Aorta (tissue), 5 donors: ENCODE measurements at regions of chr16 and their contacts with region 1.

Region 1: GRCh38 chr16:72467157-72467759 is 295.3 kb upstream of the PMFBP1 start:
- DNase-seq: no peak
- ATAC-seq: no peak
- H3K4me3 ChIP-seq: no peak overlapping the region
- H3K27ac ChIP-seq: no peak overlapping the region
- H3K4me1 ChIP-seq: no peaks in the 10 kb centered on the region
- H3K27me3 ChIP-seq: no peaks in the 10 kb centered on the region

Region 2: GRCh38 chr16:72124761-72125634 is 342.3 kb before region 1 on chr16:
- intact Hi-C with region 1: loop called (anchors 5 to 10 kb)
- DNase-seq: peak; percentile 84 to 91
- ATAC-seq: peak; percentile 83
- H3K4me3 ChIP-seq: no peak overlapping the region
- H3K27ac ChIP-seq: no peak overlapping the region
- H3K4me1 ChIP-seq: no peaks in the 10 kb centered on the region
- H3K27me3 ChIP-seq: no peaks in the 10 kb centered on the region

Region 3: GRCh38 chr16:72241930-72242329 is 225.3 kb before region 1 on chr16:
- intact Hi-C with region 1: loop called (anchors 2 to 5 kb)
- DNase-seq: no peak
- ATAC-seq: no peak
- H3K4me3 ChIP-seq: no peak overlapping the region
- H3K27ac ChIP-seq: no peak overlapping the region
- H3K4me1 ChIP-seq: no peaks in the 10 kb centered on the region
- H3K27me3 ChIP-seq: peaks cover 0 to 1% of the 10 kb centered on the region in 2 donors

Region 4: GRCh38 chr16:72626623-72627022 is 159.4 kb after region 1 on chr16:
- intact Hi-C with region 1: no loop called
- DNase-seq: no peak
- ATAC-seq: no peak
- H3K4me3 ChIP-seq: no peak overlapping the region
- H3K27ac ChIP-seq: no peak overlapping the region
- H3K4me1 ChIP-seq: peaks cover 0 to 2% of the 10 kb centered on the region in 2 donors
- H3K27me3 ChIP-seq: no peaks in the 10 kb centered on the region

Region 5: GRCh38 chr16:72908362-72909167 is 441.3 kb after region 1 on chr16:
- intact Hi-C with region 1: no loop called
- DNase-seq: no peak
- ATAC-seq: no peak
- H3K4me3 ChIP-seq: no peak overlapping the region
- H3K27ac ChIP-seq: no peak overlapping the region
- H3K4me1 ChIP-seq: no peaks in the 10 kb centered on the region
- H3K27me3 ChIP-seq: no peaks in the 10 kb centered on the region